HepG2 (cell line): ENCODE measurements at regions of chr3 and their contacts with region 1.

Region 1: DNA sequence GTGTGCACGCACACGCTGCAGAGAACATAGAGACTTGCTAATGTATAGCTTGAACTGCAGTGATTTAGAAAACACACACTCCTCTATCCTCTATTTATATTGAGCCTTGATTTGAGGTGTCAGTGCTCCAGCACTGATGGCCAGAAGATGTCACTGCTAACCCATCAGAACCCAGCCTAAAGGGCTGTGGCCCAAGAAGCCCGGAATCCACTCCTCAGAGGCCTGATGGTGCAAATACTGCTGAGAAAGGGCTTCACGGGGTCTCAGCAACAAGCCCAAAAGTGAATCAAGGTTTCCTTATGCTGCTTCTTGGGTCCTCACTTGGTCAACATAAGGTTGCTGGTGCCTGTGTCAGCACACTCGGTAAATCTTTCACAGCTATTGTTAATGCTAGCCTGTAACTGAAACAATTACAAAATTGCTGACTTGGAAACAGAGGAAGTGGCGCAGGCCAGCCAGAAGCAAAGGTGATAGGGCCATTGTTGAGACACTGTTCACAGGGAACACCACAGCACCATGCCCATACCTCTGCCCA is 60.3 kb downstream of the HEG1 start:
- DNase-seq: peak; percentile 49
- ATAC-seq: peak; percentile 79
- H3K4me3 ChIP-seq: no peak overlapping the region
- H3K27ac ChIP-seq: no peak overlapping the region
- H3K4me1 ChIP-seq: peaks cover 42% of the 10 kb centered on the region
- H3K27me3 ChIP-seq: no peaks in the 10 kb centered on the region
- CTCF ChIP-seq: peak; percentile 81
- EP300 ChIP-seq: no peak
- POLR2A ChIP-seq: no peak
- RAD21 ChIP-seq: peak; percentile 83

Region 2: DNA sequence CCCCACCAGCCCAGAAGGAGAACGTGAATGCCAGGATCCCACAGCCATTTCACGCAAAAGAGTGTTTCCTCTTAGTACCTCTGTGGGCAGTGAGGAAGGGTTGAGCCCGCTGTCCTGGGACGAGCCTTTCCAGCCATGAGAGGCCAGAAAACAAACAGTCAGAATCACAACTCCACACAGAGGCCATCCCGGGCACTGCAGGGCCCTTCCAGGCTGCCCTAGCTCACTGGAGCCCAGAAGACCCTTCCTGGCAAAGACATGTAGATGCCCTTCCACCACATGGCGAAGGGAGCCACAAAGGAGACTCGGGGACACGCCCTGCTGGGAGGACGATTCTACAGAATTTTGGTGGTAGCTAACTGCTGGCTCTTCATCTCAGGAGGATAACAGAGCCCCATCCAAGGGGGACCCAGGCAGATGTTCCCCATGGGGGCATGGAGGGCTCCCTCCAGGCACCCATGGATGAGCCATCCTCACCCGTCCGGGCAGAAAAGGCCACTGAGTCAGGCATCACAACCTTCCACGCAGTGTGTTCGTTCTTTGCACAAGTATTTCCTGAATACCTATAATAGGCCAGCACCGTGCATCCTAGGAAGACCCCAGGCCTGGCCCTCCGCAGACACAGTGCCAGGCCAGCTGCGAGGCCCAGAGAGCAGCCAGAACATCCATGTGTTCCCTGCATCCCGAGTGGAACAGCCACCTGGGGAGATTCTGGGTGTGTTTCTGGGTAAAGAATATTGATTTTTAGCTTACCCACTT is 169.8 kb after region 1 on chr3:
- CTCF ChIA-PET with region 1: interaction called, 4 read pairs
- POLR2A ChIA-PET with region 1: no interaction called
- in situ Hi-C with region 1: loop called (anchors 10 kb)
- intact Hi-C with region 1: loop called (anchors 1 kb)
- DNase-seq: peak; percentile 34
- ATAC-seq: peak; percentile 94
- H3K4me3 ChIP-seq: no peak overlapping the region
- H3K27ac ChIP-seq: no peak overlapping the region
- H3K4me1 ChIP-seq: no peaks in the 10 kb centered on the region
- H3K27me3 ChIP-seq: peaks cover 0 to 13% of the 10 kb centered on the region in 2 experiments; a peak in 2 of 5 replicates
- CTCF ChIP-seq: peak; percentile 77
- EP300 ChIP-seq: no peak
- POLR2A ChIP-seq: no peak
- RAD21 ChIP-seq: peak; percentile 64; the same call in 1 of the 2 replicates

Region 3: GRCh38 chr3:125437631-125438435 is 442.3 kb after region 1 on chr3:
- CTCF ChIA-PET with region 1: interaction called, 3 read pairs
- POLR2A ChIA-PET with region 1: no interaction called
- in situ Hi-C with region 1: loop called (anchors 25 kb)
- intact Hi-C with region 1: loop called (anchors 5 kb)
- DNase-seq: peak; percentile 32
- ATAC-seq: peak; percentile 39
- H3K4me3 ChIP-seq: peak overlapping the region; percentile 7 to 58 (median 47); a peak in 5 of 6 replicates
- H3K27ac ChIP-seq: peak overlapping the region; percentile 43
- H3K4me1 ChIP-seq: peaks cover 54% of the 10 kb centered on the region
- H3K27me3 ChIP-seq: no peaks in the 10 kb centered on the region; a peak in 1 of 5 replicates
- CTCF ChIP-seq: peak; percentile 84
- EP300 ChIP-seq: no peak
- POLR2A ChIP-seq: no peak
- RAD21 ChIP-seq: peak; percentile 79

Region 4: GRCh38 chr3:125443923-125444322 is 448.4 kb after region 1 on chr3:
- CTCF ChIA-PET with region 1: no interaction called
- POLR2A ChIA-PET with region 1: no interaction called
- in situ Hi-C with region 1: loop called (anchors 25 kb)
- intact Hi-C with region 1: loop called (anchors 5 kb)
- DNase-seq: no peak
- ATAC-seq: no peak
- H3K4me3 ChIP-seq: no peak overlapping the region
- H3K27ac ChIP-seq: no peak overlapping the region
- H3K4me1 ChIP-seq: peaks cover 21% of the 10 kb centered on the region
- H3K27me3 ChIP-seq: no peaks in the 10 kb centered on the region
- CTCF ChIP-seq: no peak
- EP300 ChIP-seq: no peak
- POLR2A ChIP-seq: no peak
- RAD21 ChIP-seq: no peak